K562 (cell line): ENCODE measurements at regions of chr1 and their contacts with region 1.

Region 1: GRCh38 chr1:203625628-203626019 is 1.0 kb upstream of the ATP2B4 start:
- DNase-seq: peak; percentile 74 to 79 (median 78)
- ATAC-seq: peak; percentile 49
- H3K4me3 ChIP-seq: no peak overlapping the region
- H3K27ac ChIP-seq: peak overlapping the region; percentile 92
- H3K4me1 ChIP-seq: peaks cover 40 to 49% of the 10 kb centered on the region in 2 experiments
- H3K27me3 ChIP-seq: no peaks in the 10 kb centered on the region
- CTCF ChIP-seq: peak; percentile 65 to 87 (median 69)
- EP300 ChIP-seq: peak; percentile 45
- POLR2A ChIP-seq: no peak
- RAD21 ChIP-seq: peak; percentile 94 to 95

Region 2: GRCh38 chr1:203290261-203291089 is 335.1 kb before region 1 on chr1:
- CTCF ChIA-PET with region 1: no interaction called
- POLR2A ChIA-PET with region 1: no interaction called
- in situ Hi-C with region 1: no loop called
- intact Hi-C with region 1: no loop called
- DNase-seq: peak; percentile 85 to 92 (median 90)
- ATAC-seq: peak; percentile 80
- H3K4me3 ChIP-seq: no peak overlapping the region
- H3K27ac ChIP-seq: peak overlapping the region; percentile 50; the same call in 2 of the 3 replicates
- H3K4me1 ChIP-seq: peaks cover 38 to 53% of the 10 kb centered on the region in 2 experiments
- H3K27me3 ChIP-seq: no peaks in the 10 kb centered on the region
- CTCF ChIP-seq: no peak
- EP300 ChIP-seq: no peak
- POLR2A ChIP-seq: no peak; the same call in 1 of the 2 replicates
- RAD21 ChIP-seq: no peak

Region 3: DNA sequence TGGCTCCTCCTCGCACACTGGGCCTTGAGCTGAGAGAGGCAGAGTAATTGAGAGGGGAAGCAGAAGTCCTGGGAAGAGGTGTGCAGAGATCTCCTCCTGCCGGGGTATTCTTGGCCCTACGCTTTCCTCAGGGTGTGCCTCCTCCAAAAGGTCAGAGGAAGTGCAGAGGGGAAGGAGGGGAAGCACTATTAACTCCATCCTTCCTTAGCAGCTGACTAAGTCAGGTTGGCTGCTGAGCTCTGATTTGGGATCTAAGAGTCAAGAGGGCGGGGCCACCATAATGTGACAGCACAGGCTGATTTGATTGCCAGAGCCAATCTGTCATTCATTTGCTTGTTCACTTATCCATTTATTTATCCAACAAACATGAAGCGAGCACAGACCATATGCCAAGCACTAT is 13.3 kb after region 1 on chr1:
- CTCF ChIA-PET with region 1: no interaction called
- POLR2A ChIA-PET with region 1: interaction called, 14 read pairs
- in situ Hi-C with region 1: no loop called
- intact Hi-C with region 1: no loop called
- DNase-seq: peak in 2 of 4 experiments; percentile 50 to 57
- ATAC-seq: peak; percentile 79
- H3K4me3 ChIP-seq: no peak overlapping the region
- H3K27ac ChIP-seq: no peak overlapping the region
- H3K4me1 ChIP-seq: peaks cover 11 to 21% of the 10 kb centered on the region in 2 experiments; a peak in 4 of 5 replicates
- H3K27me3 ChIP-seq: no peaks in the 10 kb centered on the region; a peak in 1 of 5 replicates
- CTCF ChIP-seq: peak; percentile 14 to 64 (median 35); a peak in 4 of 6 replicates
- EP300 ChIP-seq: 0 out of 2 replicates have a peak, but pooled peaks have one; percentile 3
- POLR2A ChIP-seq: no peak
- RAD21 ChIP-seq: peak; percentile 67 to 87

Region 4: GRCh38 chr1:203673550-203674427 is 48.2 kb after region 1 on chr1:
- CTCF ChIA-PET with region 1: no interaction called
- POLR2A ChIA-PET with region 1: no interaction called
- in situ Hi-C with region 1: no loop called
- intact Hi-C with region 1: loop called (anchors 5 kb)
- DNase-seq: peak; percentile 79 to 92 (median 86)
- ATAC-seq: peak; percentile 93
- H3K4me3 ChIP-seq: no peak overlapping the region
- H3K27ac ChIP-seq: peak overlapping the region; percentile 77
- H3K4me1 ChIP-seq: peaks cover 22 to 34% of the 10 kb centered on the region in 2 experiments
- H3K27me3 ChIP-seq: no peaks in the 10 kb centered on the region
- CTCF ChIP-seq: peak; percentile 49 to 74 (median 58)
- EP300 ChIP-seq: peak; percentile 71
- POLR2A ChIP-seq: no peak; the same call in none of the 2 replicates
- RAD21 ChIP-seq: peak; percentile 55 to 70

Region 5: DNA sequence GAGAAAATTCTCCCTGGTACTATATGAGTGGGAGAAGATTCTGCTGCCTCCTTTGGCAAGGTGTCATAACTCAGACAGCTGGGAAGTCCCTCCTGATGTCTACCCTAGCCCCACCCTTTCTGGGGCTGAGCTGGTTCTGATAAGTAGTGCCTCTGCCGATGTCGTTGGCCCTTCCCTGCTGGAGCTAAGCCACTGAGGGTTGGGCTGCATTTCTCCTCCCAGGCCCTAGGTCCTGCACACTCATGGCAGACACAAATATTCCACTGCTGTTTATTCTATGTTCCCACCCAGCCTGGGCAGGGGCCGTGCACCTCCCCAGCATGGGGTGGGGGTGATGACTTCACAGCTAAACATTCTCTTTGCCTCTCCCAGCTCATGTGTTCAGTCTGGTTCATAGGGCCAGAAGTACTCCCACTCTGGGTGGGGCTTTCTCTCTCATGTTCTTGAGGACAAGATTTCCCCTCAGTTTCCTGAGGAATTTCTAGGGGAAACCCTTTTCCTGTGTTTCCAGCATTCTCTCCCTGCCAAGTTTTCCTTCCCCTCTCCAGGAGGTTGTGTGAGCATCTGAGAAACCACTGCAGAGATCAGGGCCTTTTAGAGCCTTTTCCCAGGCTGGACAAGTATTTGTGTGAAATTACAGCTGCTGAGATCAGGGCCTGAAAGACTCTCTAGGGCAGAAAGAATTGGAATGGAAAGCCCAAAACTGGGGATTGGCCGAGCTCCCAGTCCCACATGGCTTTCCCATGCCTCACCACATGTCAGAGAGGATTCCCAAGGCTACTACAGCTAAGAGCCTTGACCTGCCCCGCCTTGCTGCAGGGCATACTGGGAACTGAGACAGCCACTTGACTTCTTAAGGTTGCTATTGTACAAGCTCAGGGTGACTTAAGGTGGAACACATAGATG is 67.2 kb after region 1 on chr1:
- CTCF ChIA-PET with region 1: no interaction called
- POLR2A ChIA-PET with region 1: interaction called, 4 read pairs
- in situ Hi-C with region 1: no loop called
- intact Hi-C with region 1: loop called (anchors 2 kb)
- DNase-seq: peak; percentile 83 to 93 (median 85)
- ATAC-seq: peak; percentile 93
- H3K4me3 ChIP-seq: no peak overlapping the region
- H3K27ac ChIP-seq: peak overlapping the region; percentile 67
- H3K4me1 ChIP-seq: peaks cover 19 to 31% of the 10 kb centered on the region in 2 experiments; a peak in 4 of 5 replicates
- H3K27me3 ChIP-seq: no peaks in the 10 kb centered on the region
- CTCF ChIP-seq: no peak
- EP300 ChIP-seq: peak; percentile 67; the same call in 1 of the 2 replicates
- POLR2A ChIP-seq: 0 out of 2 replicates have a peak, but pooled peaks have one; percentile 39
- RAD21 ChIP-seq: peak in 1 of 2 experiments; percentile 27; a peak in 2 of 4 replicates

Region 6: DNA sequence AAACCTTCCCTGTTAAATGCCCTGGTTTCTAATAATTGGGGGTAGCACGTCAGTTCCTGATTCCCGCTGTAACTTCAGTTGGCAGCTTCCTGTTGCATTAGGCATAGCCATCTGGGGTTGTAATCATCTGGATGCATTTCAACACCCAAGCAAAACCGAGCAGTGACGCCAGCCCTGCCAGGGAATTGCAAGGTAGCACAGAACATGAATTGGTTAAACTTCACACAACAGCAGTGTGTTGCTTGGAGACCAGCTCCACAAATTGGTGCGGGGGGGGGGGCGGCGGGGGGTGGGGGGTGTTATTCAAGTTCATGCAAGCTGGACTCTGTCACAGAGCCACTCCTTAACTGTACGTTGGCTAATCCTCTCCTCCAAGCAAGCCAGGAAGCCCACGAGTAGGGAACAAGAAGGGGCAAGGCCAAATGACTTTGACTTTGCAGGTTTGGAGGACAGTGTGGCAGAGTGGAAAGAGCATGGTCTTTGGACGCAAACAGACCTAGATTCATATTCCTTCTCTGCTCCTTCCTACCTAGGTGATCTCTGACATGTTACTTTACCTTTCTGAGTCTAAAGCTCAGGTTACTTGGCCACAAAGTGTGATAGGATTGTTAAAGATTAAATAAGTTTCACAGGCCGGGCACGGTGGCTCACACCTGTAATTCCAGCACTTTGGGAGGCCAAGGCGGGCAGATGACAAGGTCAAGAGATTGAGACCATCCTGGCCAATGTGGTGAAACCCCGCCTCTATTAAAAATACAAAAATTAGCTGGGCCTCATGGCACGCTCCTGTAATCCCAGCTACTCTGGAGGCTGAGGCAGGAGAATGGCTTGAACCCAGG is 144.1 kb after region 1 on chr1:
- CTCF ChIA-PET with region 1: no interaction called
- POLR2A ChIA-PET with region 1: no interaction called
- in situ Hi-C with region 1: no loop called
- intact Hi-C with region 1: loop called (anchors 10 kb)
- DNase-seq: peak in 1 of 4 experiments; percentile 19
- ATAC-seq: peak; percentile 40
- H3K4me3 ChIP-seq: no peak overlapping the region
- H3K27ac ChIP-seq: no peak overlapping the region
- H3K4me1 ChIP-seq: peaks cover 4 to 10% of the 10 kb centered on the region in 2 experiments; a peak in 4 of 5 replicates
- H3K27me3 ChIP-seq: peaks cover 37 to 41% of the 10 kb centered on the region in 2 experiments
- CTCF ChIP-seq: no peak
- EP300 ChIP-seq: no peak
- POLR2A ChIP-seq: no peak
- RAD21 ChIP-seq: no peak

Region 7: GRCh38 chr1:203861379-203862184 is 236.0 kb after region 1 on chr1 and contains the start of gene SNRPE:
- CTCF ChIA-PET with region 1: no interaction called
- POLR2A ChIA-PET with region 1: no interaction called
- in situ Hi-C with region 1: no loop called
- intact Hi-C with region 1: loop called (anchors 1 kb)
- DNase-seq: peak; percentile 96 to 100 (median 97)
- ATAC-seq: peak; percentile 97
- H3K4me3 ChIP-seq: peak within 1 kb of the TSS; percentile 92
- H3K27ac ChIP-seq: peak within 1 kb of the TSS; percentile 95
- H3K4me1 ChIP-seq: peaks cover 4 to 10% of the 10 kb centered on the region in 2 experiments; a peak in 4 of 5 replicates
- H3K27me3 ChIP-seq: no peaks in the 10 kb centered on the region
- CTCF ChIP-seq: peak; percentile 96 to 99 (median 98)
- EP300 ChIP-seq: peak; percentile 59
- POLR2A ChIP-seq: peak; percentile 99
- RAD21 ChIP-seq: peak; percentile 98 to 99
- polyA plus RNA-seq, gene SNRPE: 1,614 to 1,893 TPM

Region 8: DNA sequence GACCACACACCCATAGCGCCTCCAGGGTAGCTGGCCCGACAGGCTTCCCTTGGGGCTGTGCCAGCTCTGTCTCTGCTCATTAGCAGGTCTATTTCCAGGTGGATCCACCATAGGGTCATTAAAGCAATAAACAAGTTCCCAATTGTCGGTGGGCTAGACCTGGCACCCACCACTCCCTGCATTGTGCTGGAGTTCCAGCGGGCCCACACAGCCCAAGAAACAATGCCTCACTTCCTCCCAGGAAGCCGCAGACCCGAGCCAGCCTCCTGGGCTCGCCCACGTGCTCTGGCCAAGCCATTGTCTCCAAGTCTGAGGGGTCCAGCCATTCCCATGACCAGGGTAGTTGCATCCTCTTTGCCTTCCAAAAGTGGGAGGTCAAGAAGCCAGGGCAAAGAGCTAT is 419.8 kb after region 1 on chr1:
- CTCF ChIA-PET with region 1: no interaction called
- POLR2A ChIA-PET with region 1: no interaction called
- in situ Hi-C with region 1: no loop called
- intact Hi-C with region 1: no loop called
- DNase-seq: no peak
- ATAC-seq: no peak
- H3K4me3 ChIP-seq: no peak overlapping the region
- H3K27ac ChIP-seq: no peak overlapping the region
- H3K4me1 ChIP-seq: no peaks in the 10 kb centered on the region
- H3K27me3 ChIP-seq: peaks cover 3 to 40% of the 10 kb centered on the region in 2 experiments; a peak in 3 of 5 replicates
- CTCF ChIP-seq: no peak
- EP300 ChIP-seq: no peak
- POLR2A ChIP-seq: no peak
- RAD21 ChIP-seq: no peak

Region 9: DNA sequence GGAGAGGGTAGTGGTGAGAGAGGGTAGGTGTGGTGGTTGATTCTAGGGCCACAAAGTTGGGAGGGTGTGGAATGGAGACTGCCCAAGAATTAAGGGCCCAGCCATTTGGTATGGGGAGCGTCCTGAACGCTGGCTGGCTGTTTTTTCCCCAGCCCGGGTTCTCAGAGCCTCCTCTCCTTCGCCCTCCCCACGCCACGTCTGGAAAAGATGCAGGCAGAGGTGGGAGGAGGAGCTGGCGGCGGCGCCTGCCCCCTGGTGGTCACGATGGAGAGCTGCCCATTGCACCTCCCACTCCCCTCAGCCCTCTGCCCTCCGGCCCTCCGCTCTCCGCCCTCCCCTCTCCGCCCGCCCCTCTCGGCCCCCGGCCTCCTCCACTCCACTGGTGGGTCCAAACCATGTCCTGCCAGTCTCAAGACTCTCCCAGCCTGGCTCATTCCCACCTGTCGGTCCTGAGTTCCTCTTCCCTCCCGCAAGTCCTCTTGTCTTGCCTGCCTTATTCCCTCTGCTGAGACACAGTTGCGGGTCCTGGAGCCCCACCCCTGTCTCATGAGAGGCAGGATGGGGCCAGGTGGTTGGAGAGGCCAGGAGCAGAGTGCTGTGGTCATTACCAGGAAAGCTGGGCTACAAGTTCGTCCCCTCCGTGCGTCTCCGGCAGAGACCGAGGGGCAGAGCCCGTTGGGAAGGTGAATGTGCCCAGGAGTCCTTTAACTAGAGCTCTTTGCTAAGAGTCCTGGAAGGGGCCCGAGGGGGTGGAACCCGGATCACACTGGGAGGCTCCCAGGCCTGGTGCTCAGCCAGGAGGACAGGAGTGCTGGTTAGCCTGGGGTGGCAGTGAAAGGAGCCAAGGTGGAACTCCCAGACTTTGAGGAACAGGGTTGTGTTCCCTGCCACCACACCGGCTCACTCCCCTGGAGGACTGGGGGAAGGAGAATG is 503.6 kb after region 1 on chr1:
- CTCF ChIA-PET with region 1: no interaction called
- POLR2A ChIA-PET with region 1: no interaction called
- in situ Hi-C with region 1: no loop called
- intact Hi-C with region 1: loop called (anchors 10 kb)
- DNase-seq: peak; percentile 73 to 96 (median 94)
- ATAC-seq: peak; percentile 97
- H3K4me3 ChIP-seq: no peak overlapping the region
- H3K27ac ChIP-seq: no peak overlapping the region
- H3K4me1 ChIP-seq: peaks cover 0 to 15% of the 10 kb centered on the region in 2 experiments; a peak in 2 of 5 replicates
- H3K27me3 ChIP-seq: peaks cover 16 to 38% of the 10 kb centered on the region in 2 experiments
- CTCF ChIP-seq: peak; percentile 78 to 92 (median 88)
- EP300 ChIP-seq: no peak
- POLR2A ChIP-seq: no peak
- RAD21 ChIP-seq: peak; percentile 88 to 90